GM12878 (cell line): ENCODE measurements at regions of chr6 and their contacts with region 1.

Region 1: GRCh38 chr6:129893640-129894039 is 32.5 kb upstream of the TMEM244 start:
- DNase-seq: no peak
- ATAC-seq: peak; percentile 59; the same call in 2 of the 3 replicates
- H3K4me3 ChIP-seq: no peak overlapping the region
- H3K27ac ChIP-seq: no peak overlapping the region
- H3K4me1 ChIP-seq: no peaks in the 10 kb centered on the region; the same call in none of the 2 replicates
- H3K27me3 ChIP-seq: no peaks in the 10 kb centered on the region
- CTCF ChIP-seq: peak in 2 of 3 experiments; percentile 17 to 43; a peak in 4 of 6 replicates
- EP300 ChIP-seq: no peak
- POLR2A ChIP-seq: no peak
- RAD21 ChIP-seq: peak; percentile 61

Region 2: GRCh38 chr6:129860908-129861665 is 32.6 kb before region 1 on chr6 and contains the start of gene TMEM244:
- CTCF ChIA-PET with region 1: interaction called, 4 read pairs
- POLR2A ChIA-PET with region 1: no interaction called
- RAD21 ChIA-PET with region 1: no interaction called
- SMC1A ChIA-PET with region 1: interaction called, 10 read pairs
- in situ Hi-C with region 1: no loop called
- intact Hi-C with region 1: no loop called
- DNase-seq: no peak
- ATAC-seq: peak; percentile 83
- H3K4me3 ChIP-seq: peak within 1 kb of the TSS; percentile 28; the same call in 1 of the 2 replicates
- H3K27ac ChIP-seq: no peak within 1 kb of the TSS
- H3K4me1 ChIP-seq: no peaks in the 10 kb centered on the region; the same call in 1 of the 2 replicates
- H3K27me3 ChIP-seq: no peaks in the 10 kb centered on the region
- CTCF ChIP-seq: no peak
- EP300 ChIP-seq: no peak
- POLR2A ChIP-seq: no peak
- RAD21 ChIP-seq: no peak
- polyA plus RNA-seq, gene TMEM244: not detected

Region 3: GRCh38 chr6:129882510-129883023 is 11.1 kb before region 1 on chr6:
- CTCF ChIA-PET with region 1: interaction called, 10 read pairs
- POLR2A ChIA-PET with region 1: no interaction called
- RAD21 ChIA-PET with region 1: interaction called, 6 read pairs
- SMC1A ChIA-PET with region 1: interaction called, 5 read pairs
- in situ Hi-C with region 1: no loop called
- intact Hi-C with region 1: no loop called
- DNase-seq: peak; percentile 74
- ATAC-seq: peak; percentile 96
- H3K4me3 ChIP-seq: peak overlapping the region; percentile 13; the same call in 1 of the 2 replicates
- H3K27ac ChIP-seq: peak overlapping the region; percentile 81
- H3K4me1 ChIP-seq: peaks cover 6% of the 10 kb centered on the region
- H3K27me3 ChIP-seq: no peaks in the 10 kb centered on the region
- CTCF ChIP-seq: no peak
- EP300 ChIP-seq: peak; percentile 63 to 80
- POLR2A ChIP-seq: no peak
- RAD21 ChIP-seq: no peak

Region 4: DNA sequence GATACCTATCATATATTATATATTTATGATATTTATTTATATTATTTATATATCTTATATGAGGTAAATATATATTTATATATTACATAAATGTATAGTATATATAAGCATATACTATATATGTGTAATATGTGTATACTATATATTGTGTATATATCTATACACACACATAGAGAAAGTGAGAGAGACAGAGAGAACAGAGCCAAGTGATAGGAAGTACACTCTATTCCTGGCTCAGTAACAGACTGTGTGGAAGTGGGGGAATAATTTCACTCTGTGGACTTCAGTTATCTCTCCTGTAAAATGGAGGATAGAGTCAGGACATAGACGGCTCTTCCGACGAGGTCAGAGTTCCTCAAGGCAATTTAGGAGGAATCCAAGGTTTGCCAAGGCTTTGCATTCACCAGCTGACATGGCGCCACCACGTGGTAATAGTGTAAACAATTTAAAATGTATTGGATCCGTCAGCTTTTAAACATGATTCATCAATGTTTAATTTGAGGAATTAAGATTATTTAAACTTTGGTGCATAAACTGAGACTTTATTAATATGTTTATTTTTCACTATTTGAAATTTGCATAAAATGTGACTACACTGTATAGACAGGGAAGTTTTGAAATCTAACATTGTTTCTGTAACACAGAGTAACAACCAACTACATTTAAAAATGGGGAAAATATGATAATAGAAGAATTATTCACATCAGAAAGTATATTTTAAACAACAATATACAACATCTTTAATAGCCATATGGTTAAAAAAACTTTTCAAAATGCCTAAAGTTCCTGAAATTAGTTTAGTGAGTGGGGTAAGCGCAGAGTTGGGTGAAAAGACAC is 42.9 kb after region 1 on chr6:
- CTCF ChIA-PET with region 1: interaction called, 24 read pairs
- POLR2A ChIA-PET with region 1: no interaction called
- RAD21 ChIA-PET with region 1: interaction called, 5 read pairs
- SMC1A ChIA-PET with region 1: interaction called, 19 read pairs
- in situ Hi-C with region 1: no loop called
- intact Hi-C with region 1: loop called (anchors 1 kb)
- DNase-seq: peak; percentile 21
- ATAC-seq: peak; percentile 84
- H3K4me3 ChIP-seq: no peak overlapping the region
- H3K27ac ChIP-seq: no peak overlapping the region
- H3K4me1 ChIP-seq: no peaks in the 10 kb centered on the region
- H3K27me3 ChIP-seq: no peaks in the 10 kb centered on the region; a peak in 1 of 4 replicates
- CTCF ChIP-seq: peak; percentile 64 to 77 (median 66)
- EP300 ChIP-seq: no peak
- POLR2A ChIP-seq: no peak
- RAD21 ChIP-seq: peak; percentile 81

Region 5: DNA sequence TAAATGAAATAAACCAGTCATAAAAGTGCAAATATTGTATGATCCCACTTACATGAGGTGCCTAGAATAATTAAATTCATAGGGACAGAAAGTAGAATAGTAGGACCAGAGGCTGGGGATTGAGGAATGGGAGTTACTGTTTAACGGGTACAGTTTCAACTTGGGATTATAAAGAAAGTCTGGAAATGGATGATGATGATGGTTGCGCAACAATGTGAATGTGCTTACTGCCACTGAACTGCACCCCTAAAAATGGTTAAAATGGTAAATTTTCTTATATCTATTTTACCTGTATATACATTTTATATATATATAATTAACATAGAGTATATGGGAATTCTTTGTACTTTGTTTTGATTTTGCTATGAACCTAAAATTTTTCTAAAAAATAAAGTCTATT is 71.5 kb after region 1 on chr6:
- CTCF ChIA-PET with region 1: no interaction called
- POLR2A ChIA-PET with region 1: no interaction called
- RAD21 ChIA-PET with region 1: no interaction called
- SMC1A ChIA-PET with region 1: no interaction called
- in situ Hi-C with region 1: no loop called
- intact Hi-C with region 1: no loop called
- DNase-seq: no peak
- ATAC-seq: no peak
- H3K4me3 ChIP-seq: no peak overlapping the region
- H3K27ac ChIP-seq: no peak overlapping the region
- H3K4me1 ChIP-seq: no peaks in the 10 kb centered on the region
- H3K27me3 ChIP-seq: peaks cover 0 to 3% of the 10 kb centered on the region in 2 experiments; a peak in 1 of 4 replicates
- CTCF ChIP-seq: no peak
- EP300 ChIP-seq: no peak
- POLR2A ChIP-seq: no peak
- RAD21 ChIP-seq: no peak

Region 6: GRCh38 chr6:130027948-130028347 is 134.3 kb after region 1 on chr6:
- CTCF ChIA-PET with region 1: no interaction called
- POLR2A ChIA-PET with region 1: no interaction called
- RAD21 ChIA-PET with region 1: no interaction called
- SMC1A ChIA-PET with region 1: interaction called, 4 read pairs
- in situ Hi-C with region 1: loop called (anchors 5 kb)
- intact Hi-C with region 1: no loop called
- DNase-seq: no peak
- ATAC-seq: peak; percentile 89
- H3K4me3 ChIP-seq: no peak overlapping the region
- H3K27ac ChIP-seq: no peak overlapping the region
- H3K4me1 ChIP-seq: peaks cover 14% of the 10 kb centered on the region; the same call in 1 of the 2 replicates
- H3K27me3 ChIP-seq: no peaks in the 10 kb centered on the region
- CTCF ChIP-seq: no peak
- EP300 ChIP-seq: no peak
- POLR2A ChIP-seq: no peak
- RAD21 ChIP-seq: no peak

Region 7: DNA sequence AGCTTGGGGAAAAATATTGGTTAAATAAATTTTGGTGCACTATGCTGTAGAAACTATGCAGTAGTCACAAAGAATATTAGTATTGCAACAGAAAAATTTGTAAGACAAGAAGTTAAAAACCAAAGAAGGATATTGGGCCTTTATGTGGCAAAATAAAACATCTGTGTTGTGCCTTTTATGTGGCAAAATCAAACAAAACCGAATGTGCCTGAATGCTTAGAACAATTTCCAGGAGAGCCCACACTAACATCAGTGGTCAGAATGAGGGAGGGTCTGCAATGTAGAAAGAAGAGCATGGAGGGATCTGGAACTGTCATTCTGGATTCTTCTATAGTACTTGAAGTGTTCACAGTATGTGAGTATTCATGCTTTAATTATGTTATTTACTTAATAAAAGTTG is 199.9 kb after region 1 on chr6:
- CTCF ChIA-PET with region 1: no interaction called
- POLR2A ChIA-PET with region 1: no interaction called
- RAD21 ChIA-PET with region 1: no interaction called
- SMC1A ChIA-PET with region 1: no interaction called
- in situ Hi-C with region 1: no loop called
- intact Hi-C with region 1: no loop called
- DNase-seq: no peak
- ATAC-seq: no peak
- H3K4me3 ChIP-seq: no peak overlapping the region
- H3K27ac ChIP-seq: no peak overlapping the region
- H3K4me1 ChIP-seq: no peaks in the 10 kb centered on the region
- H3K27me3 ChIP-seq: no peaks in the 10 kb centered on the region
- CTCF ChIP-seq: no peak
- EP300 ChIP-seq: no peak
- POLR2A ChIP-seq: no peak
- RAD21 ChIP-seq: no peak